Heart left ventricle (tissue), 16 donors: ENCODE measurements at regions of chr14 and their contacts with region 1.

Region 1: DNA sequence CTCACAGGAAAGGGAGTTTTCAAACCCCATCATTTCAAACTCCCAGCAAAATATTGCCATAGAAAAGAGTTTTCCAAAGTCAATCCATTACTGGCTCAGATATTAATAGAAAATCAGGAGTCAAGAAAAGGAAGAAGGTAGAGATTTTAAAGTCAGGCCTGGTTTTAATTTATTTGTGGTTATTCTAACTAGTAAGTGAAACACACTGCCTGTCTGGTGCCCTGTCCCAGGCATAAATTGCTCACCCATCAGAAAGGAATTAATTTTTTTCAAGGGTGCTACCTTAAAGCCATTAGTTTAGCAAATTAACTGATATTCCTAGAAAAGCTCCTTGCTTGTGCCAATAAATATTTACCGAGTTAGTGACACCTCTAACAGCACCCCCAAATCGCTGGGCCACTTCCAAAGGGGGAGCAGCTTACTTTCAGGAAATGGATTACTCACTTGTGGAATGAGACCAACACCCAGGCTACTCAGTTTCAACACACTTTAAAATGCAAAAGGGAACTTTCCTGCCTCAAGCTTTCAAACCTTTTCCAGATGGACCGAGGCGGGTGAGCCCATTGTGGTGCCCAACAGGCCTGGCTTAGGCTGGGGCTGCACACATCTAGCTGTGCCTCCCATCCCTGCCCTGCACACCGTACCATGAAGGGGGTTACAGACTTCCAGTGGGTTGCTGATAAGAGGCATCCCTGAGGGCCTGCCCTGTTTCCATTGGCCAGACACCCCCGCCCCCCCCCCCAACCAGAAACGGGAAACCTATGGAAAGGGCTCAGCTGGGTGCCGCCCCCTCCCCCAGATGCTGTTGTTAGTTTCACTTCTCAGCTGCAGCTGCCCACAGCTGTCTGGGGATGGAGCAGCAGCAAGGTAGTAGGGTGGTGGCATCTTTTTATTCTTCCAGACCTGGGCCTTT is 117.2 kb downstream of the SAMD4A start:
- DNase-seq: peak in 3 of 5 donors; percentile 31 to 56 (median 48)
- ATAC-seq: peak in 2 of 4 donors; percentile 6 to 14
- H3K4me3 ChIP-seq: no peak overlapping the region
- H3K27ac ChIP-seq: peak overlapping the region in 11 of 12 donors; percentile 79 to 95 (median 87)
- H3K4me1 ChIP-seq: peaks cover 19 to 95% (median 74%) of the 10 kb centered on the region in 12 donors
- H3K27me3 ChIP-seq: no peaks in the 10 kb centered on the region
- CTCF ChIP-seq: no peak
- POLR2A ChIP-seq: no peak

Region 2: DNA sequence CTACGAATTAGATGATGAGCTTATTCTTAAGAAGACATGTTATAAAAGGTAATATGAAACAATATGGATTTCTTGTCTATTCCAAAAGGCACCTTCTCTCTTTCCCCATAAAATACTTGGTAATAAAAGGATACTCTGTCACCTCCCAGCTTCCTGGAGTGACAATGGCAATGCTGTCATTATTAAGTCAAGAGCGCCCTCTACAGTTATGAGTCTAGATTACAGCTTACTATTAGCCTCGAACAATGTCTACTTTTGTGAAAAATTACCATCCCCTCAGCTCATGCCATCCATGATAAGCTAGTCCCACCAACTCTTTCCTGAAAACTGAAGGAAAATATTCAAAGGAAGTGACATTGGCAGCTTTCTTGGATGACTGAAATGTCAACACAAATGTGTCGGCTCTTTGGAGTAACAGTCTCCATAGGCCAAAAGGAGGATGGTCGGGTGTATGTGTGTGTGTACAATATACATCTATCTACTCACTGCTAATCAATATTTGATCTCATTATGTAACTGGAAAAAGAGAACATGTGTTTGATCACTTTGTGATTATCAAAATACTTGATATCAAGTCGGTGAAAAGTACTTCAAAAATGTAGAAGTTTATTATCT is 336.0 kb before region 1 on chr14:
- intact Hi-C with region 1: no loop called
- DNase-seq: no peak
- ATAC-seq: peak in 2 of 4 donors; percentile 34 to 51
- H3K4me3 ChIP-seq: no peak overlapping the region
- H3K27ac ChIP-seq: peak overlapping the region in 8 of 12 donors; percentile 37 to 81 (median 68)
- H3K4me1 ChIP-seq: peaks cover 0 to 39% (median 13%) of the 10 kb centered on the region in 12 donors
- H3K27me3 ChIP-seq: no peaks in the 10 kb centered on the region
- CTCF ChIP-seq: peak; percentile 59 to 82 (median 71)
- POLR2A ChIP-seq: no peak

Region 3: DNA sequence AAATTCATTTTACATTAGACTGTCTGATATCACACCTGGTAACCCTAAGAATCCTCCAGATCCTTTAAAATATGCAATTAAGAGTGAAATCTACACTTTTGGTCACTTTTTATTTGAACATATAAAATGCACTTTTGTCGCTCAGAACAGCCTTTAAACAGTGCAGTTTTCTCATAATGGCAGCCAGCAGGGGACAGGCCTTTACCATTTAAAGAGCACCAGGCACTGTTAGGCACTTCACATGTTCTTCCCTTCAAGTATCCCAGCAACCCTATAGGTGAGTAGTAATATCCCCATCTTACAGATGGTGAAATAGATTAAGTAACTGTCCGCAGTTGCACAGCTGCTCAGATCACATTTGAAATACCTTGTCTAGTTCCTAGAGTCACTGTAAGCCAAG is 128.5 kb before region 1 on chr14:
- intact Hi-C with region 1: no loop called
- DNase-seq: no peak
- ATAC-seq: no peak
- H3K4me3 ChIP-seq: no peak overlapping the region
- H3K27ac ChIP-seq: no peak overlapping the region
- H3K4me1 ChIP-seq: peaks cover 0 to 6% (median 0%) of the 10 kb centered on the region in 12 donors
- H3K27me3 ChIP-seq: no peaks in the 10 kb centered on the region
- CTCF ChIP-seq: no peak
- POLR2A ChIP-seq: no peak

Region 4: DNA sequence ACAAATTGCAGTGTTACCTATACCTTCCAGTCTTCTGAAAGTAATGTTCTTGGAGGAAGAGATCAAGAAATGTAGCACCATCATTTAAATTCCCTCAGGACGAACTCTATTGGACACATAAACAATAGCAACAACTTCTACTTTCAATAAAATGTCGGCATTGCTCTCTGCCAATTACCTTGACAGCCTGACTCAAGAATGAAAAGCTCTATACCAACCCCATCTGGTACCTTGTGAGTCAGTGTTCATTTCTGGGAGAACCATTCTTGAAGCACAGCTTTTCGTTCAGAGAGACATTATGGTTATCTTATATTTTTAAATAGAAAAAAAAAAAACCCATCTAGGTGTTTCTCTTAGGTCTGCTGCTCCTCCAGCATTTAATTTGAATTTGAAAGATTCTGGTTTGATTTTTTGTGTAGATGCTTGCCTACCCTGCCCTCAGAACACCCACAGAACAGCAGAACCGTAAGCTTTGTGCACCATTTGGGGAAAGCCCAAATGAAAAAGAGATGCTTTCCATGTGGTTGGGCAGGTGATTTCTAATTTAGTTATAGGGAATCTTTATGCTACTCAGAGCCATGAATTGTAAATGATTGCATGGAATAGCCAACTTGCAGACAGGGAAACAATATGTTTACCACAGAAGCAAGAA is 38.8 kb after region 1 on chr14:
- intact Hi-C with region 1: loop called in 1 of 10 experiments (anchors 5 kb)
- DNase-seq: no peak
- ATAC-seq: peak; percentile 24 to 70 (median 54)
- H3K4me3 ChIP-seq: no peak overlapping the region
- H3K27ac ChIP-seq: peak overlapping the region in 5 of 12 donors; percentile 7 to 54 (median 35)
- H3K4me1 ChIP-seq: peaks cover 0 to 41% (median 18%) of the 10 kb centered on the region in 12 donors
- H3K27me3 ChIP-seq: no peaks in the 10 kb centered on the region
- CTCF ChIP-seq: peak; percentile 27 to 69 (median 45)
- POLR2A ChIP-seq: no peak

Region 5: DNA sequence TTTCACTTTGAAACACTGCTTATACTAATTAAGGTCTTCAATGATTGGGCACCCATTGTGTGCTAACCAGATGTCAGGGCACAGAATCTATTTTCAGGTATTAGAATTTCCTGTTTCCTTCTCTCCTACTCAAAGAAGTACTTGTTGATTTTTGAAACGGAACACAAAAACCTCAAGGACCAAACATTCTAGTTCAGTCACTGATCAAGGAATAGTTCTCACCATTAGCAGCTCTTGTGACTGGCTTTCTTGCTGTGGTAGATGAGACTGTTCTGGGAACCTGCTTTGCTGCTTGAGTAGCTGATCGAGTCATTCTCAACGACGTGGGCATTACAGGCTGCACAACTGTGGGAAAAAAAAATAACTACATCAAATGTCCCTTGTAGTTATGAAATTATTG is 496.3 kb after region 1 on chr14:
- intact Hi-C with region 1: no loop called
- DNase-seq: no peak
- ATAC-seq: no peak
- H3K4me3 ChIP-seq: no peak overlapping the region
- H3K27ac ChIP-seq: no peak overlapping the region
- H3K4me1 ChIP-seq: no peaks in the 10 kb centered on the region
- H3K27me3 ChIP-seq: no peaks in the 10 kb centered on the region
- CTCF ChIP-seq: no peak
- POLR2A ChIP-seq: no peak